ENCODE measurements at regions of chr7 and their contacts with region 1.

Region 1: GRCh38 chr7:105118612-105119600 is 104.9 kb downstream of the KMT2E start:
- DNase-seq: no peak
- CTCF ChIP-seq: no peak

Region 2: DNA sequence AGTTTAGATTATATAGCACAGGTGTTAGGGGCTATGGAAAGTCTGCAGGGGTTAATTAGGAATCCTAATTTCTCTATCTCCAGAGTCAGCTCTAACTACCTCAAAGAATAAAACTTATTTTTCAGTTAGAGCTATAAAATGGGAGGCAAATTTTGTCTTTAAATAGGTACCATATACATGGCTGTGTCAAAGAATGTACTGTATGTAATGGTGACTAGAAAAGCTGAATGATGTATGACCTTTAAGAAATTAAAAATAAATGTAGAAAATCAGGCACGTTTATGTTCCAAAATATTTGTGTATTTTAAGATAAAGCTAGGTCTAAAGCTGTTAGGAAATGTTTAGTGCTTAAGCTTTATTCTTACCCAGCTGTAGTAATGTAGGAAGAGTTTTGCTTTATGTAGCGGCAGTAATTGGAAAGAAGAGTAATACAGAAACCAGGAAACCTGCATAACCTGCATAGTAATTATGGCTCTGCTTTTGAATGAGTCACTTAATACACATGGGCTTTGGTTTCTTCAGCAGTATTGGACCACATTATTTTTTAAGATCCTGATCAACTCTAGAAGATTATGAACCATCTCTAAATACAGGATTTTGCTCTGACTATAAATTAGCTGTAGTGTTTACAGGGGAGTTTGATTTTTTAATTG is 19.9 kb before region 1 on chr7:
- CTCF ChIA-PET with region 1: interaction called, 12 read pairs
- POLR2A ChIA-PET with region 1: no interaction called
- DNase-seq: peak; percentile 22
- CTCF ChIP-seq: no peak

Region 3: DNA sequence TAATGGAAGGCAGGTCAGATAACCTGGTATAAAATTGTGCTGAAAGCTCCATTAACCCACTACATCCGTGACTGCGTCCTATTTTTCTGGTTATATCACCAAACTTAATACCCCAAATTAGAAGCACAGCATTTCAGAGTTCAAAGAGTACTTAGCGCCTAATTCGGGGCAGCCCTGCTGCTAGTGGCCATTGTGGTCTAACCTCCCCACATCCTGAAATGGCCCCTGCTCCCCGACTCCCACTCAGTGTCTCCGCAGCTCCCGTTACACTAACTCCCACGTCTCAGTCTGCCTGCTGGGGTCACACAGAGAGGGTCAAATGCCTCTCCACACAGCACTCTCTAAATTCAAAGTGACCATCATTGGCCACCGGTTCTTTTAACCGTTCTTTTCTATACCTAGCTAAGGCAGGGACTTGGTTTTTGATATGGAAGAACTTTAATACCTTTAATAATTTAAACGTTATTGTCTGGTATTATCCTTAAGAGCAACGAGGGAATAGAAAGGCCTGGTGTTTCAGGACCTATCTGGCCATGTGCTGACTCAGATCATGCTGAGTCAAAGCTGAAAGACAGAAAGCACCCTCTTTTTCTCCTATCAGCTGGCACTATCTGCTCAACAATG is 12.2 kb after region 1 on chr7:
- CTCF ChIA-PET with region 1: interaction called, 10 read pairs
- POLR2A ChIA-PET with region 1: no interaction called
- DNase-seq: peak; percentile 27
- CTCF ChIP-seq: no peak